ENCODE measurements at regions of chr21 and their contacts with region 1.

Region 1: GRCh38 chr21:40120940-40121575 is 253.8 kb downstream of the PCP4 start:
- DNase-seq: peak; percentile 1
- ATAC-seq: no peak
- H3K4me3 ChIP-seq: no peak overlapping the region
- H3K27ac ChIP-seq: no peak overlapping the region
- H3K4me1 ChIP-seq: no peaks in the 10 kb centered on the region
- H3K27me3 ChIP-seq: no peaks in the 10 kb centered on the region
- CTCF ChIP-seq: peak; percentile 59
- POLR2A ChIP-seq: no peak
- RAD21 ChIP-seq: peak; percentile 46

Region 2: GRCh38 chr21:40964691-40965090 is 843.6 kb after region 1 on chr21:
- CTCF ChIA-PET with region 1: no interaction called
- POLR2A ChIA-PET with region 1: interaction called, 37 read pairs
- dilution Hi-C with region 1: no loop called
- in situ Hi-C with region 1: no loop called
- intact Hi-C with region 1: no loop called
- DNase-seq: no peak
- ATAC-seq: no peak
- H3K4me3 ChIP-seq: no peak overlapping the region
- H3K27ac ChIP-seq: no peak overlapping the region
- H3K4me1 ChIP-seq: no peaks in the 10 kb centered on the region
- H3K27me3 ChIP-seq: no peaks in the 10 kb centered on the region
- CTCF ChIP-seq: no peak
- POLR2A ChIP-seq: no peak
- RAD21 ChIP-seq: no peak

Measured in IMR-90 (cell line).